Body of pancreas (tissue), 4 donors: ENCODE measurements at regions of chr1 and their contacts with region 1.

Region 1: DNA sequence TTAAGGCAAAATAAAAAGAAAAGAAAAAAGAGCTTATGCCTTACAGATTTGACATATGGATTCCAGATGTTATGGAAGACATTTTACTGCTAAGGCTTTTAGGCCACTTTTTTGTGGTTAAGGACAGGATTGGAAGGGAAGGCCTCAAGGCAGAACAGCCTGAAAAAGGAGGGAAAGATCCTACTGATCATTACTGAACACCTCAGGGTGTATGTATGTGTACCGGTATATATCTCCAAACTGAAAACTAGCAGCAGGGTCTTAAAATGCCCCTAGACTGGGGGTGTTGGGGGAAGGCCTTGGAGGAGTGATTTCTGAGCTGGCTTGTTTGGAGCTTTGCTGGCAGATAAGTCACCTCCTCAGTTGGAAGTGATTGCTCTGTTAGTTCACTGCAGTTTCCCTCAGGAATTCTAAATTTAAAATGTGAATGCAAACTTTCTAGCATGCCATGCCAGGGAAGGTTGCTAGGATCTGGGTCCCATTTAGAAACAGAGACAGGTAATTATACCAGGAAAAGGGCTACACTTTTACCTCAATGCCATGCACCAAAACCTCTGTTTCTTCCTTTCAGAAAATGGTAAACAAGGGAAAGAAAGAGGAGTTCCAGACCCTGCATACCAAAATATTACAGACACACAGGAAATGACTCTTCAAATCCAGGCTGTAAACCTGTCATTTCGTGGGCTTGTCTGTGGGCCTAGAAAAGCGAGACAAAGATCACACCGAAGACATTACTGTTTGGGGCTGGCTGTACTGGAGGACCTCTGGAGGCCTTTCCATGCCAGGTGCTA is 15.0 kb downstream of the C1orf52 start:
- DNase-seq: no peak
- ATAC-seq: no peak
- H3K4me3 ChIP-seq: no peak overlapping the region
- H3K27ac ChIP-seq: no peak overlapping the region
- H3K4me1 ChIP-seq: peaks cover 16% of the 10 kb centered on the region
- H3K27me3 ChIP-seq: no peaks in the 10 kb centered on the region
- CTCF ChIP-seq: no peak
- POLR2A ChIP-seq: no peak

Region 2: DNA sequence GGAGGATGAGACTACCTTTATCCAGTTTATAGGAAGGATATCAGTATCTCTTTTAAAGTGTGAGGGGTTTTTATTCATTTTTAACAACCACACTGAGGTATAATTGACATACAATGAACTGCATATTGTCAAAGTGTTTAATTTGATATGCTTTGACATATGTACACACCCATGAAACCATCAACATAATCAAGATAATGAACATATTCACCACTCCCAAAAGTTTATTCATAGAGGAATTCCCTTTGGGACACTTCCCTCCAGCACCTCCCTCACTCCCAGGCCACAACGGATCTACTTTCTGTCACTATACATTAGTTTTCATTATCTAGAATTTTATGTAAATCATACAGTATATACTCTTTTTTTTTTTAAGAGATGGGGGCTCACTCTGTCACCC is 132.8 kb before region 1 on chr1:
- intact Hi-C with region 1: loop called (anchors 5 kb)
- DNase-seq: no peak
- ATAC-seq: no peak
- H3K4me3 ChIP-seq: no peak overlapping the region
- H3K27ac ChIP-seq: no peak overlapping the region
- H3K4me1 ChIP-seq: peaks cover 7% of the 10 kb centered on the region
- H3K27me3 ChIP-seq: no peaks in the 10 kb centered on the region
- CTCF ChIP-seq: no peak
- POLR2A ChIP-seq: no peak